HepG2 (cell line): ENCODE measurements at regions of chr1 and their contacts with region 1.

Region 1: DNA sequence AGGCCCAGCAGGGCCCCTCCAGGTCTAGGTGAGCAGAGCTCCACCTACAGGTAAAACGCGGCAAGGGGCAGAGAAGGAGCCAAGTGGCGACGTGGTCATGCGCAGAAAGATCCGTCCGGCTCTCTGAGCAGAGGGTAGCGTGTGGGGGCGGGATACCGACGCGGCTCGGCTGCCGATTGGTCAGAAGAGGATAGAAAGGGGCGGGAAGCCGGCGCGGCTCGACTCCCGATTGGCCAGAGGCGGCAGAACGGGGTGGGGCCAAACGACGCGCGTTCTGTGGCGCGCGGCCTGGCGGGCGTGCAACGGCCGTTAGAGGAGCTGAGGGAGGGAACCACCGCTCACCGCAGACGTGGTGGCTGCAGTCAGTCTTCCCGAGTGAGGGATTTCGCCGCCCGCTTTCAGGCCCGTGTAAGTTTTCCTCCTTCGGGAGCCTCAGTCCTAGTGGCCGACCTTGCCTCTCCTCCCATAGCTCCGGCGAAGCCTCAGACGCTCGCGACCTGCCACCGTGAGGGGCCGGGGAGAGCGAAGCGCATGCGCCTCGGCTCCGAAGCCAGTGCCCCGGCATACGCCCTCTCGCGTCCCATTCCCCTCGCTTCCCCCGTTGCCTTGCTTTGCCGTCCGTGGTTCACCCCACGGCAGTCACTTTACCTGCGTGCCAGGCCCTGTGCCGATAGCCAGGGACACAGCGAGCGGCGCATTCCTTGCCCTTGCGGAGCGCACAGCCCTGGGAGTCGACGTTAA is at the start of gene CEP85:
- DNase-seq: peak; percentile 93
- ATAC-seq: peak; percentile 95
- H3K4me3 ChIP-seq: peak within 1 kb of the TSS; percentile 69 to 95 (median 84)
- H3K27ac ChIP-seq: peak within 1 kb of the TSS; percentile 78
- H3K4me1 ChIP-seq: peaks cover 44% of the 10 kb centered on the region
- H3K27me3 ChIP-seq: no peaks in the 10 kb centered on the region; a peak in 1 of 5 replicates
- CTCF ChIP-seq: peak; percentile 99
- EP300 ChIP-seq: peak in 1 of 2 experiments; percentile 15; a peak in 1 of 4 replicates
- POLR2A ChIP-seq: peak; percentile 92 to 97
- RAD21 ChIP-seq: peak; percentile 82
- total RNA-seq, gene CEP85: 22.4 and 26.7 TPM in 2 replicates

Region 2: DNA sequence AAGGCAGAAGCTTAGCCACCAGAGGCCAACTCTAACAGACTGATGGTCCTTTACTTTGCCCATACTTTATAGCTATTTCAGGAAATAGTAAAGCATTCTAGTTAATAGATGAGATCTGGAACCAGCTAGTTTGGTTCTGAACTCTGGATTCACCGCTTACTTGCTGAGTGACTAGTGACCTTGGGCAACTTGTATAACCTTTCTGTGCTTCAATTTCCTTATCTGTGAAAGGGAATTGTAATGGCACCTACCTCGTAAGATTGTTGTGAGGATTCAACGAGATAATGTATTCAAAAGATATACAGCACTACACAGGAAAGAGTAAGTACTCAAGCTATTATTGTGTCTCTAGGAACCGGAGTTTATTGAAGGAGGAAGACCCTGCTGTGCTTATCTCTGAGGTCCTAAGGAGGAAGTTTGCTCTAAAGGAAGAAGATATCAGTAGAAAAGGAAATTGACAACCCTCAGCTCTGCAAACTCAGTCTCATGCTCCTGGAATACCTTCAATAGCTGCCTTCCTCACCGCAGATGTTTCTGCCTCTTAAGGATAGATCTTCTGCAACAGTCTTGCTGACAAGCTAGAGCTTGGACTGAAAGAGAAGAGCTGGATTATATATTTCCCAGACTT is 402.4 kb before region 1 on chr1:
- CTCF ChIA-PET with region 1: no interaction called
- POLR2A ChIA-PET with region 1: no interaction called
- in situ Hi-C with region 1: no loop called
- intact Hi-C with region 1: no loop called
- DNase-seq: no peak
- ATAC-seq: no peak
- H3K4me3 ChIP-seq: no peak overlapping the region
- H3K27ac ChIP-seq: no peak overlapping the region
- H3K4me1 ChIP-seq: no peaks in the 10 kb centered on the region
- H3K27me3 ChIP-seq: no peaks in the 10 kb centered on the region
- CTCF ChIP-seq: no peak
- EP300 ChIP-seq: no peak
- POLR2A ChIP-seq: no peak
- RAD21 ChIP-seq: no peak

Region 3: DNA sequence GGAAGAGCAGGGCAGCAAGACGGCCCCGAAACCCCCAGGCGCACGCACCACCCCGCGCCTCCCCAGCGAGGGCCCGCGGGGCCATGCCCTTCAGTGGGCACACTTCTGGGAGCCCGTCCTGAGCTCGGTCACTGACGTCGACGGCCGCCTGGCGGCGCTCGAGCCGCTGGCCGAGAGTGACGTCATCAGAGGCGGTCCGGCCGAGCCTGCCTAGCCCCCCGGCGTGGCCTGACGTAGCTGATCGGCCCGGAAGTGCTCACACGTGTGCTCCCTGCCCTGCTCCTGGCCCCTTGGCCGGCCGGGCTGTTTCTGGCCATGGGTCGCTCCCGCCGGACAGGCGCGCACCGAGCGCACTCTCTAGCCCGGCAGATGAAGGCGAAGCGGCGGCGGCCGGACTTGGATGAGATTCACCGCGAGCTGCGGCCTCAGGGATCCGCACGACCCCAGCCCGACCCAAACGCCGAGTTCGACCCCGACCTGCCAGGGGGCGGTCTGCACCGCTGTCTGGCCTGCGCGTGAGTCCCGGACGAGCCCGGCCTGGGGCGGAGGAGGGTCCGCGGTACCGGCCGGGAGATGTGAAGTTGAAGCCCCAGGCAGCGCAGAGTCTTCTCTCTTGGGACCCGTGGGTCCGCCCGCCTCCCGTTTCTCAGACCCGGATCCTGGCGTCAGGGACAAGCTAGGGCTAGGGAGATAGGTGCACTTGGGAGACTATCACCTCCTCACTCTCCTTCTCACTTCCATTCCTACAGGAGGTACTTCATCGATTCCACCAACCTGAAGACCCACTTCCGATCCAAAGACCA is 64.2 kb before region 1 on chr1 and contains the start of gene ZNF593:
- CTCF ChIA-PET with region 1: interaction called, 11 read pairs
- POLR2A ChIA-PET with region 1: interaction called, 31 read pairs
- in situ Hi-C with region 1: no loop called
- intact Hi-C with region 1: loop called (anchors 2 kb)
- DNase-seq: peak; percentile 80
- ATAC-seq: peak; percentile 93
- H3K4me3 ChIP-seq: peak within 1 kb of the TSS; percentile 83 to 91 (median 90)
- H3K27ac ChIP-seq: peak within 1 kb of the TSS; percentile 60
- H3K4me1 ChIP-seq: peaks cover 27% of the 10 kb centered on the region
- H3K27me3 ChIP-seq: peaks cover 0 to 9% of the 10 kb centered on the region in 2 experiments; a peak in 4 of 5 replicates
- CTCF ChIP-seq: peak; percentile 98
- EP300 ChIP-seq: no peak
- POLR2A ChIP-seq: peak in 1 of 2 experiments; percentile 80; a peak in 2 of 4 replicates
- RAD21 ChIP-seq: peak; percentile 74
- total RNA-seq, gene ZNF593: 55.8 and 59.3 TPM in 2 replicates

Region 4: DNA sequence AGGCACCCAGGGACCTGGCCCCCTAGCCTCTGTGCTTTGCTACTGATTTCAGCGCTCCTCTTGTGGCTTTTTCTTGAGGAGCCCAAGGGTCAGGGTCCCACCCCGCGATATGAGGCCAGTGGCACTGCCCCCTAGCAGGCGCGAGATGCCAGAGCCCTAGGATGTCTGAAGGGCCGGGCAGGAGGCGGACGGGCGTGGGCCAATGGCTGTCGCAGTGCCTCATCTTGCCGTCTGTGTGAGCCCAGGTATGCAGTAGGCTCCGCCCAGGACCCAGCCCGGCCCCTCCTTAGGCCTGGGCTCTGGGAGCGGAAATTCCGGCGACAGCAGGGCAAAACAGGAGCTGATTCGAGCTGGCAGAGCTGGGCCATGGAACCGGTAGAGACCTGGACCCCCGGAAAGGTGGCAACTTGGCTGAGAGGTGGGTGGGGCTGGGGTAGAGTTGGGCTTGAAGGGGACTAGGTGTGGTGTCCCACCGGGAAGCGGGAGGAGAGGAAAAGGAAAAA is 56.8 kb before region 1 on chr1 and contains the start of gene CNKSR1:
- CTCF ChIA-PET with region 1: no interaction called
- POLR2A ChIA-PET with region 1: interaction called, 12 read pairs
- in situ Hi-C with region 1: no loop called
- intact Hi-C with region 1: no loop called
- DNase-seq: peak; percentile 62
- ATAC-seq: peak; percentile 94
- H3K4me3 ChIP-seq: peak within 1 kb of the TSS; percentile 28 to 62 (median 59); a peak in 5 of 6 replicates
- H3K27ac ChIP-seq: no peak within 1 kb of the TSS
- H3K4me1 ChIP-seq: peaks cover 24% of the 10 kb centered on the region
- H3K27me3 ChIP-seq: no peaks in the 10 kb centered on the region
- CTCF ChIP-seq: peak; percentile 55
- EP300 ChIP-seq: no peak
- POLR2A ChIP-seq: peak in 1 of 2 experiments; percentile 44; a peak in 1 of 4 replicates
- RAD21 ChIP-seq: no peak
- total RNA-seq, gene CNKSR1: 1.5 and 3.4 TPM in 2 replicates

Region 5: DNA sequence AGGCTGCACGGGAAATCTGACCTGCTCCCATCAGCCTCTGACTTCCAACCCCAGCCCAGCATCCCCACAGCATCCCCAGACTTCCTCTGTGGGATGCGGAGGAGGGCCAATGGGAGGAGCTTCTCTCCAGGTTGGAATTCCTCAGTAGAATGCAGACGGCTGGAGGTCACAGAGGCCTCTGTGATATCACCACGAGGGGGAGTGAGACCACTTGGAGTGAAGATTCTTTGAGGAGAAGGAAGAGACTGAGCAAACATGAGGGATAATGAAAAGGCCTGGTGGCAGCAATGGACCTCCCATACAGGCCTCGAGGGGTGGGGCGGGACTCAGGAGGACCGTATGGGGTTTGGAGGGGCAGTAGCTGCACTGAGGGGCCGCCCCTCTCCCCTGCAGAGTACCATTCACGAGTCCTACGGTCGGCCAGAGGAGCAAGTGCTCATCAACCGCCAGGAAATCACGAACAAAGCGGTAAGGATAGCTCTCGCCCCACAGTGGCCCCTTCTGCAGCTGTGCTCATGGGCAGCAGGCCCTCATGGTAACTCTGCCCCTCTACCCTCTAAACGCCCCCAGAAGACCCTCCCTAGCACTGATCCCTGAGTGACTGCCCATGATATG is 43.6 kb before region 1 on chr1 and contains the start of gene CATSPER4:
- CTCF ChIA-PET with region 1: no interaction called
- POLR2A ChIA-PET with region 1: no interaction called
- in situ Hi-C with region 1: no loop called
- intact Hi-C with region 1: loop called (anchors 1 kb)
- DNase-seq: peak; percentile 54
- ATAC-seq: peak; percentile 80
- H3K4me3 ChIP-seq: no peak within 1 kb of the TSS
- H3K27ac ChIP-seq: no peak within 1 kb of the TSS
- H3K4me1 ChIP-seq: no peaks in the 10 kb centered on the region
- H3K27me3 ChIP-seq: peaks cover 0 to 11% of the 10 kb centered on the region in 2 experiments; a peak in 2 of 5 replicates
- CTCF ChIP-seq: peak; percentile 68
- EP300 ChIP-seq: no peak
- POLR2A ChIP-seq: no peak
- RAD21 ChIP-seq: no peak
- total RNA-seq, gene CATSPER4: not detected in 2 replicates